ENCODE measurements at regions of chr13 and their contacts with region 1.

Region 1: GRCh38 chr13:50123862-50124536 is 108.8 kb downstream of the KCNRG start:
- DNase-seq: peak; percentile 95

Region 2: DNA sequence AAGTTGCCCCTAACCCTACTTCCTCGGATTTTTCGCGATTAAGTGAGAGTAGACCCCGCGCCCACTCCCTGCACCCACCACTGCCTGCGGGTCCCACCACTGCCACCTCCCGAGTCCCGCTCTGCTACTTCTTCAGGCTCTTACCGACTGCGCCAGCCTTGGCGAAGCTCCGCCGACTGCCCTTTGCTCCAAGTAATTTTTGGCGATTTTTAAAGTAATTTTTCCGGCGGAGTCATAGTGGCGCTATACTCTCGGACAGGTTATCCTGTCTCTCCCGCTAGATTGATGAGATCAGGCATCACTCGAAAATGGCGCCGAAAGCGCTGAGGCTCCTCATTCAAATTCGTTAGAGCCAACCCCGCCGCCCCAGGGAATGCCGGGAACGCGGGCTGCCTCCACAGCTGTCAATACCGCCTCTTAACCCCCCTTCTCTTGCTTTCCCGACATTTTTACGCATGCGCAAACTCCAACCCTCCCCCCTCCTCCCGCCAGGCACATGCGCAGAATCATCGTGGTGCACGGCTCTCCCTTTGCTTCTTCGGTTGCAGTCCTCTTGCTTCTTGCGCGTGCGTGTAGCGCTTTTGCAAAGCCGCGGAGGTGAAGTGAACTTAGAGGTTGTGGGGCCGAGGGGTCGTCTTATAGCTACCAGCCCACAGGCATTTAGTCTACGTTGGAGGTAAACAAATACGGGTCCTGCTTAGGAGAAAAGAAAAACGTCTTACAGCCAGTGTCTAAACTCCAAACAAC is 42.1 kb before region 1 on chr13:
- intact Hi-C with region 1: loop called (anchors 2 kb)
- DNase-seq: peak; percentile 99

Region 3: DNA sequence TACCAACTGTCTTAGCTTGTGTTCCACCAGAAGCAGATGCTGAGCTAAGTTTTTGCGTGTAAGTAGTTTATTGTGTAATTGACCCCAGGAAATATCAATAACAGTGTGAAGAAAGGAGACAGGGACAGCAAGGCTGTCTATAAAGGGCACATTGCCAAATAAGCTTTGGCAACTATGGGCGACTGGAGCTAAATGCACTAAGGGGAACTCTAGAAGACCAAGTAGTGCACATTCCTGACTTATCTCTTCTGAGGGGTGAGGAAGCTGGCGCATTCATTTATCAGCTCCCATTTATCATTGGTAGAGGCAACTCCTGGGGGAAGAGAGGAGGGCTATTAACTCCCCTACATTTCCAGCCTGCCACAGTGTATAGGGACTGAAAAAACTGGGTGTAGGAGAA is 584.5 kb after region 1 on chr13:
- intact Hi-C with region 1: loop called (anchors 10 kb)
- DNase-seq: no peak